Dorsolateral prefrontal cortex (tissue), 120 donors: ENCODE measurements at regions of chr2 and their contacts with region 1.

Region 1: DNA sequence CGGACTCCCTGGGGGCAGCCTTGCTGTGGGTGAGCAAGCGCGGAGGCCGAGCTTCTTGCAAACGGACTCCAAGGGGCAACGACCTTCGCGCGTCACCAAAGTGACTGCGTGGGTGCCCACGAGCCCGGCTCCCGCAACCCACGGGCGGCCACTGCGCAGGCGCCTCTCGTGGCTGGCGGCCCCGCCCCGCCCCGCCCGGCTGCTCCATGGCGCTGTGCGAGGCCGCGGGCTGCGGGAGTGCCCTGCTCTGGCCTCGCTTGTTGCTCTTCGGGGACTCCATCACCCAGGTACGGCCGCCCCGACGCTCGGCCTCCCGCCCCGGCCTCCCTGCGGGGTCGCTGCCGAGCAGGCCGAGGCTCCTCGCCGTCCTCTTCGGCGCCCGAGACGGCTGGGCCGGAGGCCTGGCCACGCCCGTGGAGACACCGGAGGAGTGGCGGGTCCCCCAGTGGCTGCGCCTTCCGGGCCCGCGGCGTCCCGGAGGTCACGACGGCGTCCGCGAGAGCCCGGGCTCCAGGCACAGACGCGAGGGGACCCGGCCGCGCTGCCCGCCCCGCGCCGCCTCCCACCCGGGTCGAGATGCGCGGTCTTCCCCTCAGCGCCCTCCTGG is at the start of gene IAH1:
- DNase-seq: peak; percentile 49 to 76 (median 68)
- H3K4me3 ChIP-seq: peak within 1 kb of the TSS; percentile 63 to 97 (median 88)
- H3K27ac ChIP-seq: peak within 1 kb of the TSS; percentile 48 to 99 (median 94)
- H3K27me3 ChIP-seq: no peaks in the 10 kb centered on the region
- CTCF ChIP-seq: peak in 25 of 56 donors; percentile 2 to 42 (median 23)
- total RNA-seq, gene IAH1: 46.2 to 81.5 (median 64.4) TPM

Region 2: DNA sequence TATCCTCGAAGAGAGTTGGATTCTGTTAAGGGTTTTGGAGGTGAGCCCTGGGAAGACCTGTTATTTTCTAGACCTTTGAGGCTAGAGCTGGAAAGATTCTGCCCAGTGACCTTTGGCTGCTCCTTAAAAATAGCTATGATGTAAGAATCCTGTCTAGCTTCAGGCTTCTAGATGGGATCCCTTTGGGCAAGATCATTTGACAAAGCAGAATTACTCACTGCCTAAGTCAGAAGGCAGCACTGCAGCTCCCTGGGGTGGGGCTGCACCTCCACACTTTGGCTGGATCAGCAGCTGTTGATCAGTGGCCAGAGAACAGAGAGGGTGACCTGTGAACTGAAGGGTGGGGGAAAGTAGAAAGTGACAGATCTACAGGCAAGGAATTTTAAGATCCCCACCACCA is 164.1 kb before region 1 on chr2:
- intact Hi-C with region 1: no loop called
- DNase-seq: no peak
- H3K4me3 ChIP-seq: no peak overlapping the region
- H3K27ac ChIP-seq: peak overlapping the region in 48 of 59 donors; percentile 4 to 81 (median 57)
- H3K27me3 ChIP-seq: no peaks in the 10 kb centered on the region
- CTCF ChIP-seq: no peak

Region 3: GRCh38 chr2:9423100-9423921 is 51.2 kb before region 1 on chr2 and contains the starts of genes CPSF3 and ITGB1BP1:
- intact Hi-C with region 1: loop called (anchors 2 to 5 kb)
- DNase-seq: peak; percentile 92 to 98 (median 96)
- H3K4me3 ChIP-seq: peak within 1 kb of the TSS; percentile 55 to 100 (median 94)
- H3K27ac ChIP-seq: peak within 1 kb of the TSS; percentile 74 to 98 (median 92)
- H3K27me3 ChIP-seq: no peaks in the 10 kb centered on the region
- CTCF ChIP-seq: peak in 35 of 56 donors; percentile 4 to 64 (median 33)
- total RNA-seq, gene CPSF3: 11.9 to 33.6 (median 22.9) TPM
- total RNA-seq, gene ITGB1BP1: 75.1 to 226 (median 141) TPM

Region 4: GRCh38 chr2:9538000-9538507 is 63.6 kb after region 1 on chr2:
- intact Hi-C with region 1: no loop called
- DNase-seq: no peak
- H3K4me3 ChIP-seq: no peak overlapping the region
- H3K27ac ChIP-seq: peak overlapping the region in 42 of 59 donors; percentile 1 to 81 (median 44)
- H3K27me3 ChIP-seq: no peaks in the 10 kb centered on the region
- CTCF ChIP-seq: no peak

Region 5: GRCh38 chr2:9565436-9566153 is 91.1 kb after region 1 on chr2:
- intact Hi-C with region 1: no loop called
- DNase-seq: peak in 2 of 10 donors; percentile 27 to 35
- H3K4me3 ChIP-seq: peak overlapping the region in 16 of 59 donors; percentile 0 to 38 (median 18)
- H3K27ac ChIP-seq: peak overlapping the region in 22 of 59 donors; percentile 2 to 83 (median 34)
- H3K27me3 ChIP-seq: no peaks in the 10 kb centered on the region
- CTCF ChIP-seq: no peak

Region 6: DNA sequence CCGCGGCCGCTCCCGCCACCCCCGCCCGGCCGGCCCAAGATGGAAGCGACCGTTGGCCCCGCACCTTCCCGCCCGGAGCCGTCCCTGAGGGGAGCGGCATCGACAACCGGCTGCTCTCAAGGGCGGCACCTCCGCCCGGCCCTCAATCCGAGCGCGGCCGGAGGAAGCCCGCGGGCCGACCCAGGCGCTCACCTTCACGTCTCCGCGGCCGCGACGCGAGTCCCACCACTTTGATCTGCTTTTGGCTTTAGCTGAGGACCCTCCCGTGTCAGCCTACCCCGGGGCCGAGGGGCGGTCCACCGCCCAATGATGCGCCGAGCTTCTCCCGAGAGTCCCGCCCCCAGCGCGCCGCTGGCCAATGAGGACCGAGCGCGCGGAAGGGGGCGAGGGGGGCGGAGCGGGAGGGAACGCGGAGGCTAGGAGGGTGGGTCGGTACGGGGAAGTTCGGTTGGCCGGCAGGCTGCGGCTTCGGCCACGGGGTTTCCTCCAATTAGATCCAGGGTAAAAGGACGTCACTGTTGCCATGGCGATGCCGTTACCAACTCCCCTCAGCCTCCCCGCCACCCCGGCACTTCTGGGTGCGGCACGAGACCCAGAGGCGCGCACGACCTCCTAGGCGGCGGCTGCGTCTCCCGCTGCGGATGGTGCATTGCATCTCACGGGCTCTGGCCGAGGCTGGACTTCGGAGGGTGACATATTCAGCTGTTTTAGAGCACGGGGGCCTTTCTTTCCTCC is 156.5 kb after region 1 on chr2 and contains the start of gene YWHAQ:
- intact Hi-C with region 1: loop called (anchors 10 kb)
- DNase-seq: peak; percentile 94 to 100 (median 99)
- H3K4me3 ChIP-seq: peak within 1 kb of the TSS; percentile 61 to 98 (median 87)
- H3K27ac ChIP-seq: peak within 1 kb of the TSS; percentile 81 to 99 (median 93)
- H3K27me3 ChIP-seq: no peaks in the 10 kb centered on the region
- CTCF ChIP-seq: peak in 12 of 56 donors; percentile 7 to 33 (median 19)
- total RNA-seq, gene YWHAQ: 223 to 572 (median 337) TPM